Heart left ventricle (tissue), 16 donors: ENCODE measurements at regions of chr1 and their contacts with region 1.

Region 1: GRCh38 chr1:72341661-72342060 is 59.3 kb upstream of the NEGR1 start:
- DNase-seq: no peak
- ATAC-seq: no peak
- H3K4me3 ChIP-seq: no peak overlapping the region
- H3K27ac ChIP-seq: no peak overlapping the region
- H3K4me1 ChIP-seq: no peaks in the 10 kb centered on the region
- H3K27me3 ChIP-seq: no peaks in the 10 kb centered on the region
- CTCF ChIP-seq: no peak
- POLR2A ChIP-seq: no peak

Region 2: GRCh38 chr1:71390518-71390917 is 951.1 kb before region 1 on chr1:
- intact Hi-C with region 1: no loop called
- DNase-seq: no peak
- ATAC-seq: no peak
- H3K4me3 ChIP-seq: no peak overlapping the region
- H3K27ac ChIP-seq: no peak overlapping the region
- H3K4me1 ChIP-seq: no peaks in the 10 kb centered on the region
- H3K27me3 ChIP-seq: no peaks in the 10 kb centered on the region
- CTCF ChIP-seq: no peak
- POLR2A ChIP-seq: no peak

Region 3: GRCh38 chr1:72271555-72272085 is 70.0 kb before region 1 on chr1:
- intact Hi-C with region 1: no loop called
- DNase-seq: no peak
- ATAC-seq: no peak
- H3K4me3 ChIP-seq: no peak overlapping the region
- H3K27ac ChIP-seq: no peak overlapping the region
- H3K4me1 ChIP-seq: no peaks in the 10 kb centered on the region
- H3K27me3 ChIP-seq: no peaks in the 10 kb centered on the region
- CTCF ChIP-seq: no peak
- POLR2A ChIP-seq: no peak

Region 4: DNA sequence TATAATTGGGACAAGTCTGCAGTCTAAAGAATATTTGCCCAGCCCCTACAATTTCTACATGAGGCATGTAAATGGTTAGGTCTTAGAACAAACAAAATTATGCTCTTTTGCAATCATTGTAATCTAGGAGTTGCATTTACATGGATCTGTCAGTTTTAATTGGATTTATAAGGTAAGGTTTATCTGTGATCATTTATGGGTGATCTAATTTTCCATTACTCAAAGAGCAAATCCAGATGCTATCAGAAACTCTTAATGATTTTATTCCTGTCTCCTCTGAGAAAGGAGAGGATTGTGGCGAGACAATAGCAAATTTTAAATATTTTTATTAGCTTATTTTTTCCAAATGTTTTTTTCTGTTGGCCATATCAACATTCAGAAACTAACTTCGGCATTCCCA is 45.2 kb before region 1 on chr1:
- intact Hi-C with region 1: loop called in 3 of 10 experiments (anchors 2 kb)
- DNase-seq: no peak
- ATAC-seq: no peak
- H3K4me3 ChIP-seq: no peak overlapping the region
- H3K27ac ChIP-seq: no peak overlapping the region
- H3K4me1 ChIP-seq: no peaks in the 10 kb centered on the region
- H3K27me3 ChIP-seq: no peaks in the 10 kb centered on the region
- CTCF ChIP-seq: no peak
- POLR2A ChIP-seq: no peak